ENCODE measurements at regions of chr14 and their contacts with region 1.

Region 1: GRCh38 chr14:102362545-102363181 is at the starts of genes CINP and TECPR2:
- DNase-seq: peak; percentile 97 to 99 (median 98)
- ATAC-seq: peak; percentile 98 to 99 (median 99)
- H3K4me3 ChIP-seq: peak within 1 kb of the TSS; percentile 81 to 96 (median 92)
- H3K27ac ChIP-seq: peak within 1 kb of the TSS; percentile 86 to 99 (median 94)
- H3K4me1 ChIP-seq: peaks cover 5 to 46% (median 28%) of the 10 kb centered on the region in 12 donors
- H3K27me3 ChIP-seq: no peaks in the 10 kb centered on the region
- CTCF ChIP-seq: no peak
- POLR2A ChIP-seq: peak; percentile 38 to 89
- total RNA-seq, gene CINP: 26.4 to 40.0 (median 33.8) TPM
- total RNA-seq, gene TECPR2: 16.8 to 30.6 (median 27.8) TPM

Region 2: DNA sequence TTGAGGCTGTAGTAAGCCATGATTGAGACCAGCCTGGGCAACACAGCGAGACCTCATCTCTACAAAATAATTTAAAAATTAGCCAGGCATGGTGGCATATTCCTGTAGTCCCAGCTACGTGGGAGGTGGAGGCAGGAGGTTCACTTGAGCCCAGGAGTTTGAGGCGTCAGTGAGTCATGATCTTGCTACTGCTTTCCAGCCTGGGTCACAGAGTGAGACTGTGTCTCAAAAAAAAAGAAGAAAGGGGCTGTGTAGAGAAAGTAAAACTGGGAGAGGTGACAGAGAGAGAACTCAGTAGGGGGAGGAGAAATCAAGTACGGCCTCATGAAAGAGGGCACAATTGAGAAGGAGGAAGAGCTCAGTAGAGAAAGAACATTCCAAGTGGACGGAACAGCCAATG is 12.5 kb after region 1 on chr14:
- intact Hi-C with region 1: loop called in 1 of 10 experiments (anchors 1 kb)
- DNase-seq: no peak
- ATAC-seq: no peak
- H3K4me3 ChIP-seq: no peak overlapping the region
- H3K27ac ChIP-seq: no peak overlapping the region
- H3K4me1 ChIP-seq: peaks cover 0 to 16% (median 5%) of the 10 kb centered on the region in 12 donors
- H3K27me3 ChIP-seq: no peaks in the 10 kb centered on the region
- CTCF ChIP-seq: no peak
- POLR2A ChIP-seq: no peak

Region 3: DNA sequence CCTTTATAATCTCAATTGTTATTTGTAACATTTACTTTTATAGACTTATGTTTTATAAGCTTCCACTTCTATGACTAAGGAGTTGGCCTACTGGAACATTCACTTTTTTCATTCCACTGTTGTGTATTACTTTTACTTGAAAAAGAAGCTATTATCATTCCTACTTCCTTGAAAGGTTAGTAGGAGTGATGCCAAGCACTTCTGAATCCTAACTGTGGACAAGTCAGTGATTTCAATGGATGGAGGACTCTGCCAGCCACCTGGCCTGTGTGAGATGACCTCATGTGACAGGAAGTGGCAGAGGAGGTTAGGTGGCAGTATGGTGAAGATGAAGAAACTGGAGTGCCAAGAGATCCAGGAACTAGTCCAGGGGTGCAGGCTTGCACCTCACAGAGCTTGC is 46.1 kb after region 1 on chr14:
- intact Hi-C with region 1: loop called in 1 of 10 experiments (anchors 5 kb)
- DNase-seq: peak in 2 of 5 donors; percentile 20 to 37
- ATAC-seq: peak; percentile 30 to 84 (median 70)
- H3K4me3 ChIP-seq: no peak overlapping the region
- H3K27ac ChIP-seq: peak overlapping the region; percentile 2 to 92 (median 79)
- H3K4me1 ChIP-seq: peaks cover 0 to 22% (median 8%) of the 10 kb centered on the region in 12 donors
- H3K27me3 ChIP-seq: no peaks in the 10 kb centered on the region
- CTCF ChIP-seq: no peak
- POLR2A ChIP-seq: no peak

Region 4: GRCh38 chr14:102509744-102510615 is 147.3 kb after region 1 on chr14 and contains the start of gene ANKRD9:
- intact Hi-C with region 1: loop called in 5 of 10 experiments (anchors 5 to 10 kb)
- DNase-seq: peak; percentile 96 to 98 (median 97)
- ATAC-seq: peak; percentile 68 to 83 (median 74)
- H3K4me3 ChIP-seq: peak within 1 kb of the TSS; percentile 47 to 90 (median 72)
- H3K27ac ChIP-seq: peak within 1 kb of the TSS; percentile 88 to 100 (median 96)
- H3K4me1 ChIP-seq: peaks cover 0 to 42% (median 14%) of the 10 kb centered on the region in 12 donors
- H3K27me3 ChIP-seq: no peaks in the 10 kb centered on the region
- CTCF ChIP-seq: peak in 3 of 12 donors; percentile 14 to 18 (median 17)
- POLR2A ChIP-seq: peak in 1 of 2 donors; percentile 60
- total RNA-seq, gene ANKRD9: 77.6 to 271 (median 141) TPM

Region 5: GRCh38 chr14:102516531-102517415 is 154.1 kb after region 1 on chr14:
- intact Hi-C with region 1: loop called in 5 of 10 experiments (anchors 5 to 10 kb)
- DNase-seq: peak in 4 of 5 donors; percentile 70 to 85 (median 72)
- ATAC-seq: peak; percentile 41 to 80 (median 78)
- H3K4me3 ChIP-seq: peak overlapping the region; percentile 51 to 89 (median 74)
- H3K27ac ChIP-seq: peak overlapping the region in 8 of 12 donors; percentile 2 to 83 (median 60)
- H3K4me1 ChIP-seq: peaks cover 0 to 14% (median 4%) of the 10 kb centered on the region in 12 donors
- H3K27me3 ChIP-seq: no peaks in the 10 kb centered on the region
- CTCF ChIP-seq: peak; percentile 67 to 100 (median 92)
- POLR2A ChIP-seq: peak in 1 of 2 donors; percentile 17

Measured in heart left ventricle (tissue), 16 donors.